Stomach (tissue), 19 donors: ENCODE measurements at regions of chr1 and their contacts with region 1.

Region 1: GRCh38 chr1:54268762-54269297 is 68.9 kb downstream of the MRPL37 start:
- DNase-seq: peak in 1 of 2 donors; percentile 59
- H3K4me3 ChIP-seq: no peak overlapping the region
- H3K27ac ChIP-seq: peak overlapping the region; percentile 9 to 95 (median 92)
- H3K4me1 ChIP-seq: peaks cover 46 to 94% (median 80%) of the 10 kb centered on the region in 4 donors
- H3K27me3 ChIP-seq: no peaks in the 10 kb centered on the region
- CTCF ChIP-seq: no peak
- EP300 ChIP-seq: no peak
- POLR2A ChIP-seq: no peak

Region 2: GRCh38 chr1:54310439-54311328 is 41.9 kb after region 1 on chr1:
- intact Hi-C with region 1: loop called (anchors 10 kb)
- DNase-seq: peak; percentile 64 to 76
- H3K4me3 ChIP-seq: no peak overlapping the region
- H3K27ac ChIP-seq: peak overlapping the region in 2 of 5 donors; percentile 67 to 77
- H3K4me1 ChIP-seq: peaks cover 51 to 94% (median 73%) of the 10 kb centered on the region in 4 donors
- H3K27me3 ChIP-seq: no peaks in the 10 kb centered on the region
- CTCF ChIP-seq: peak in 5 of 7 experiments; percentile 23 to 58 (median 42)
- EP300 ChIP-seq: no peak
- POLR2A ChIP-seq: no peak

Region 3: GRCh38 chr1:54406339-54407153 is 137.7 kb after region 1 on chr1 and contains the start of gene SSBP3:
- intact Hi-C with region 1: loop called (anchors 10 kb)
- DNase-seq: peak; percentile 95 to 98
- H3K4me3 ChIP-seq: peak within 1 kb of the TSS; percentile 87 to 97 (median 94)
- H3K27ac ChIP-seq: peak within 1 kb of the TSS; percentile 90 to 97 (median 95)
- H3K4me1 ChIP-seq: peaks cover 47 to 74% (median 66%) of the 10 kb centered on the region in 4 donors
- H3K27me3 ChIP-seq: no peaks in the 10 kb centered on the region
- CTCF ChIP-seq: no peak
- EP300 ChIP-seq: no peak
- POLR2A ChIP-seq: peak in 1 of 4 donors; percentile 36
- total RNA-seq, gene SSBP3: 4.3 to 77.6 (median 20.0) TPM